Activated CD4-positive, alpha-beta T cell treated with anti-CD3 and anti-CD28 coated beads, Interleukin-2, amount 10 ng/mL, durations not matched to agents 24 days and 14 days (primary cell): ENCODE measurements at regions of chr1 and their contacts with region 1.

Region 1: DNA sequence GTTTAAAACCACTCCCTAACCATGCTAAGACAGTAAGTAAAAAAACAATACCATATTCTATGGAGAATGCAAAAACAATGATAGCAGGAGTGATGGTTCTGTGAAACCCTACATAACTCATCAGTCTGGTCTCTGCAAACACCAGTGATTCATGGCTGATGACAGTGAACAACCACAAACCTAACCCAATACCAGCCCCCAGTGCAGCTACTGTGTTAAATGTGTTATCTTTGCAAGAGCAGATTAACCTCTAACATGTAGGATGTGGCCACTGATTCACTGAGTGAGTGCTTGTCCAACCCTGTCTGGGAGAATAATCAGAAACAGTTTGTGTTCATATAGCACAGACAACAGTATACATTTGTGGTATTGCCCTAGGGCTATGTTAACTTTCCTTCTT is 100.2 kb upstream of the COG2 start:
- DNase-seq: peak; percentile 81
- H3K4me3 Mint-ChIP-seq: no peak overlapping the region
- H3K27ac Mint-ChIP-seq: peak overlapping the region; percentile 22
- H3K4me1 Mint-ChIP-seq: peaks cover 8% of the 10 kb centered on the region
- H3K27me3 Mint-ChIP-seq: peaks cover 1% of the 10 kb centered on the region

Region 2: DNA sequence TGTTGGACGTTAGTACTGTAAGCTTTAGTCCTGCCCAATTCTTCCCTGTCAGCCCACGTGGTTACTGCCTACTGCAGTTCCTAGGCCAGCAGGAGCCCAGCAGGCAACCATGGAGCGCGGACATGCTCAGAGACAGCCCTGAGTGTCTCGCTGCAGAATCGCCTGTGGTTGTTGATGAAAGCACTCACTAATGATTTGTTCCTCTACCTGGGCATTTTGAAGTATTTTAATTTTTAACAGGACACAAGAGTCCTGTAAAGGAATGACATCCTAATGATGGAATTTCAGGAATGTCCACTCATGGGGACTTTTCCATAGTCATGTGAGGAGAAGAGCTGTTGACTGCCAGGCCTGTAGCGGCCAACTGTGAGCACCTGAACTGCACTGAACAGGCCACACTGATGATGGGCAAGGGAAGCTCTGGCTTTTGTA is 160.0 kb before region 1 on chr1:
- intact Hi-C with region 1: no loop called
- DNase-seq: no peak
- H3K4me3 Mint-ChIP-seq: no peak overlapping the region
- H3K27ac Mint-ChIP-seq: no peak overlapping the region
- H3K4me1 Mint-ChIP-seq: no peaks in the 10 kb centered on the region
- H3K27me3 Mint-ChIP-seq: peaks cover 1% of the 10 kb centered on the region

Region 3: DNA sequence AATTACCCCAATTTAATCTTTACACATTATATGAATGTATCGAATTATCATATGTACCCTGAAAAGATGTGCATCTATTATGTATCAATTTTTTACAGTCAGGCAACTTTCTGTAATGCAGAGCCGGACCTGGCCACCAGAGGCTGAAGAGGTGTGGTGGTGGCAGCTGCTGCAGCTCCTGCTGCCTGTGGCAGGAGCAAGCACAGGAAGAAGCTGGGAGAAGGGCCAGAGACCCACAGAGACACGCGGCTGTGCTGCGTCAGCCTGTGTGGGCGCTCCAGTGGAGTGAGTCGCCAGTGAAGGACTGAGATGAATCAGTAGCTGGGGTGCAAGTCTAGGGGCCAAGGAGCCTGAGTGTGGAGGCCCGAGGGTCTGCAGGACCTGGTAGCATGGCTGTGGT is 26.0 kb after region 1 on chr1:
- intact Hi-C with region 1: loop called (anchors 1 kb)
- DNase-seq: no peak
- H3K4me3 Mint-ChIP-seq: peak overlapping the region; percentile 41
- H3K27ac Mint-ChIP-seq: peak overlapping the region; percentile 73
- H3K4me1 Mint-ChIP-seq: peaks cover 4% of the 10 kb centered on the region
- H3K27me3 Mint-ChIP-seq: peaks cover 25% of the 10 kb centered on the region